ENCODE measurements at regions of chr11 and their contacts with region 1.

Region 1: DNA sequence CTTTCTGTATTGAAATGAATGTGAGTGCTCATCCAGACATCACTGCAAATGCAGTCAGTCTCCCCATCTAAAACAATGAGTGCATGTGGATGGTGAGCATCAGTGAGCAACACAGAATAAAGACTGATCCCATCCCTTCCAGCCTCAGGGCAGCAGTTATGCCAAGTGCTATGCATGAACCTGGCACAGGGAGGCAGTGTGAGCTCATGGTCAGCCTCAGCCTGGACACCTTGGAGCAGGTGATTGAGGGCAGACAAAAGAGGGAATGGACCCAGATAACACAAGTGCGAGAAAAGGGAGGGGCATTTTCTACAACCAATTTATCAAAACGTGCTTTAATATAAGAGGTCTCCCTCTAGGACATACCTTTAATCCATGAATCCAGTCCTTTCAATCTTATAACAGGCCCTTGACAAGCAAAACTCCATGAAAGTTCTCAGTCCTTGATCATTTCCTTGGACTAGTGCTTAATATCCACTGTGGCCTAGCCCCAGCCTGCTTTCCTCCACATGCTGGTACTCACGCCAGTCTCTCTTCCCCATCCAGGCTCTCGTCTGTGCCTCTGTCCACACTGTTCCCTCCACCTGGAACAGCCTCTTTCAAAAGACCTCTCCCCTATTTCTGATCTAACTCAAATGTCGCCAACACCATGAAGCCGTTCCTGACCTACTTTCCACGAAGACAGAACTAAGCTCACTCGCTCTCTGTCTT is 50.5 kb upstream of the LRRC55 start:
- DNase-seq: no peak
- H3K4me3 ChIP-seq: no peak overlapping the region
- H3K27ac ChIP-seq: no peak overlapping the region
- H3K4me1 ChIP-seq: no peaks in the 10 kb centered on the region
- H3K27me3 ChIP-seq: peaks cover 0 to 30% of the 10 kb centered on the region in 2 donors
- CTCF ChIP-seq: peak in 2 of 3 donors; percentile 19 to 50
- POLR2A ChIP-seq: no peak

Region 2: GRCh38 chr11:57055764-57056163 is 75.5 kb before region 1 on chr11:
- intact Hi-C with region 1: no loop called
- DNase-seq: no peak
- H3K4me3 ChIP-seq: no peak overlapping the region
- H3K27ac ChIP-seq: no peak overlapping the region
- H3K4me1 ChIP-seq: no peaks in the 10 kb centered on the region
- H3K27me3 ChIP-seq: no peaks in the 10 kb centered on the region
- CTCF ChIP-seq: no peak
- POLR2A ChIP-seq: no peak

Region 3: GRCh38 chr11:57094181-57094935 is 36.9 kb before region 1 on chr11:
- intact Hi-C with region 1: no loop called
- DNase-seq: no peak
- H3K4me3 ChIP-seq: no peak overlapping the region
- H3K27ac ChIP-seq: no peak overlapping the region
- H3K4me1 ChIP-seq: no peaks in the 10 kb centered on the region
- H3K27me3 ChIP-seq: no peaks in the 10 kb centered on the region
- CTCF ChIP-seq: no peak
- POLR2A ChIP-seq: no peak

Region 4: GRCh38 chr11:57150454-57150917 is 19.3 kb after region 1 on chr11:
- intact Hi-C with region 1: no loop called
- DNase-seq: no peak
- H3K4me3 ChIP-seq: no peak overlapping the region
- H3K27ac ChIP-seq: no peak overlapping the region
- H3K4me1 ChIP-seq: no peaks in the 10 kb centered on the region
- H3K27me3 ChIP-seq: no peaks in the 10 kb centered on the region
- CTCF ChIP-seq: no peak
- POLR2A ChIP-seq: no peak

Region 5: GRCh38 chr11:57202281-57202680 is 71.0 kb after region 1 on chr11:
- intact Hi-C with region 1: no loop called
- DNase-seq: no peak
- H3K4me3 ChIP-seq: no peak overlapping the region
- H3K27ac ChIP-seq: peak overlapping the region in 1 of 2 donors; percentile 32
- H3K4me1 ChIP-seq: no peaks in the 10 kb centered on the region
- H3K27me3 ChIP-seq: no peaks in the 10 kb centered on the region
- CTCF ChIP-seq: no peak
- POLR2A ChIP-seq: no peak

Region 6: GRCh38 chr11:57249384-57250319 is 118.4 kb after region 1 on chr11:
- intact Hi-C with region 1: loop called (anchors 10 kb)
- DNase-seq: peak in 1 of 2 donors; percentile 54
- H3K4me3 ChIP-seq: no peak overlapping the region
- H3K27ac ChIP-seq: peak overlapping the region in 1 of 2 donors; percentile 9
- H3K4me1 ChIP-seq: peaks cover 0 to 8% of the 10 kb centered on the region in 2 donors
- H3K27me3 ChIP-seq: no peaks in the 10 kb centered on the region
- CTCF ChIP-seq: peak; percentile 70 to 86 (median 75)
- POLR2A ChIP-seq: no peak

Measured in breast epithelium (tissue), 4 donors.